ENCODE measurements at regions of chr22 and their contacts with region 1.

Region 1: GRCh38 chr22:38755911-38756532 is at the start of gene SUN2:
- DNase-seq: peak; percentile 92 to 95 (median 92)
- H3K4me3 ChIP-seq: peak within 1 kb of the TSS; percentile 72 to 98
- H3K4me3 Mint-ChIP-seq: peak within 1 kb of the TSS; percentile 97 to 99 (median 99)
- H3K27ac ChIP-seq: peak within 1 kb of the TSS; percentile 74
- H3K27ac Mint-ChIP-seq: peak within 1 kb of the TSS; percentile 90 to 99 (median 98)
- H3K4me1 ChIP-seq: peaks cover 64% of the 10 kb centered on the region
- H3K4me1 Mint-ChIP-seq: peaks cover 35 to 81% (median 53%) of the 10 kb centered on the region in 4 donors
- H3K27me3 ChIP-seq: no peaks in the 10 kb centered on the region
- H3K27me3 Mint-ChIP-seq: no peaks in the 10 kb centered on the region
- total RNA-seq, gene SUN2: 988 to 1,004 TPM

Region 2: DNA sequence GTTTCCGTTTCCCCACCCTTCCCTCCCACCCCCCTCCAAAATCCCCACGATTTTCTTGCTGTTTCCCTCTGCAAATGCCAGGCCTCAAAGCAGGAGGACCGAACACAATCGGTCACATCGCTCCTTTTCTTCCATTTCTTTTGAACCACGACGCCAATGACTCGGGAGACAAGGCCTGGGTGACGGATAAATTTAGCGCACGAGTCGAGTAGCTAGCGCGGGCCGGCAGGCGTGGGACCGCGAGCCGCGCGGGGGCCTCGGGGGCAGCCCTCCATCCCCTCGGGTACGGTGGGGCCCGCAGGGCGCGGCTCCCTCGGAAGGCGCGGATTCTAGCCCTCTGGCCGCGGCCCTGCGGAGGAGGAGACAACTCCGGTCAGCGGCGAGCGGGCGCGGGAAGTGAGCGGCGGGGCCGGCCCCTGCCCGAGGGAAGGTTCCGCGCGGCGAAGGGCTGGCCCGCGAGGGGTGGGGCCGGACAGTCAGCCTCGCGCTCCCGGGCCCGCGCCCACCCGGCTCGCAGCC is 55.7 kb before region 1 on chr22:
- CTCF ChIA-PET with region 1: no interaction called
- POLR2A ChIA-PET with region 1: interaction called, 186 read pairs
- intact Hi-C with region 1: loop called (anchors 1 kb)
- DNase-seq: peak in 2 of 5 donors; percentile 42 to 63
- H3K4me3 ChIP-seq: peak overlapping the region in 1 of 2 donors; percentile 79
- H3K4me3 Mint-ChIP-seq: peak overlapping the region; percentile 90 to 98 (median 92)
- H3K27ac ChIP-seq: peak overlapping the region; percentile 98
- H3K27ac Mint-ChIP-seq: peak overlapping the region; percentile 98 to 100 (median 100)
- H3K4me1 ChIP-seq: peaks cover 61% of the 10 kb centered on the region
- H3K4me1 Mint-ChIP-seq: peaks cover 53 to 69% (median 57%) of the 10 kb centered on the region in 4 donors
- H3K27me3 ChIP-seq: no peaks in the 10 kb centered on the region
- H3K27me3 Mint-ChIP-seq: peaks cover 0 to 4% of the 10 kb centered on the region in 2 donors

Region 3: DNA sequence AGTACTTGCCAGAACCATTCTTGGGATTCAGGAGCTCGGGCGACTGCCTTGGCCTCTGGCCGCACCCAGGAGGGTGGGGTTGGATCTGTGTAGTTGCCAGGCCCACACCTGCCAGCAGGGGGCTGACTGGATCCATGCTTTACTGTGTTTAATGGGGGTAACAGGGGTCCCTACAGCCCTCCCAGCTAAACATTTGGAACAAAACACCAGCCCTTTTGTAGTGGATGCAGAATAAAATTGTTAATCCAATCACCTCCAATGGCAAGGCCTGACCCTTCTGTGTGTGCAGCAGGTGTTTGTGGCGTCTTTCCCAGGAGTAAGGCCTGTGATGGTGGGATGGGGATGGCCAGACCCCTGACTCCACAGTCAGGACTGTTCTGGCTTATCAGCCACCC is 22.7 kb before region 1 on chr22:
- CTCF ChIA-PET with region 1: interaction called, 41 read pairs
- POLR2A ChIA-PET with region 1: interaction called, 1,746 read pairs
- intact Hi-C with region 1: loop called (anchors 1 kb)
- DNase-seq: peak in 3 of 5 donors; percentile 41 to 51 (median 41)
- H3K4me3 ChIP-seq: no peak overlapping the region
- H3K4me3 Mint-ChIP-seq: peak overlapping the region in 2 of 8 donors; percentile 4 to 12
- H3K27ac ChIP-seq: peak overlapping the region; percentile 30
- H3K27ac Mint-ChIP-seq: peak overlapping the region; percentile 49 to 88 (median 84)
- H3K4me1 ChIP-seq: peaks cover 39% of the 10 kb centered on the region
- H3K4me1 Mint-ChIP-seq: peaks cover 18 to 60% (median 33%) of the 10 kb centered on the region in 4 donors
- H3K27me3 ChIP-seq: no peaks in the 10 kb centered on the region
- H3K27me3 Mint-ChIP-seq: no peaks in the 10 kb centered on the region

Region 4: GRCh38 chr22:38766076-38766777 is 10.2 kb after region 1 on chr22:
- CTCF ChIA-PET with region 1: interaction called, 56 read pairs
- POLR2A ChIA-PET with region 1: interaction called, 1,746 read pairs
- intact Hi-C with region 1: loop called (anchors 1 kb)
- DNase-seq: peak in 4 of 5 donors; percentile 32 to 43 (median 38)
- H3K4me3 ChIP-seq: no peak overlapping the region
- H3K4me3 Mint-ChIP-seq: no peak overlapping the region
- H3K27ac ChIP-seq: no peak overlapping the region
- H3K27ac Mint-ChIP-seq: peak overlapping the region in 1 of 7 donors; percentile 68
- H3K4me1 ChIP-seq: peaks cover 13% of the 10 kb centered on the region
- H3K4me1 Mint-ChIP-seq: peaks cover 3 to 18% (median 12%) of the 10 kb centered on the region in 4 donors
- H3K27me3 ChIP-seq: no peaks in the 10 kb centered on the region
- H3K27me3 Mint-ChIP-seq: no peaks in the 10 kb centered on the region

Region 5: DNA sequence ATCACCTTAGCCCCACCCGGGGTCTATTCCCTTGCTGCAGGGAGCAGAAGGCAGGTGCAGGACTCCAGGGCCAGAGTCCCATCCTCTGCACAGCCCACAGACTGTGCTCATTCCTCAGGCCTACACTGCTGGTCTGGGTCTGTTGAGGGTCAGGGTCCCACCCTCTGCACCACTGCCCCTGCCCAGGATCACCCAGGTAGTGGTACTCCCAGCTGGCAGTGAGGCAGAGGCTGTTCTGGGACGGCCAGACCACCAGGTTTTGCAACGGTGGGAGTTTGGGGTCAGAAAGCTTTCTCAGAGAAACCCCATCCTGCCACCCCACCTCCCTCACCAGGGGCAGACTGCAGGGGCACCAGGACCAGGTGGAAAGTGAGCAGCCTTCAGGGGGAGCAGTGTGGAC is 77.0 kb after region 1 on chr22:
- CTCF ChIA-PET with region 1: no interaction called
- POLR2A ChIA-PET with region 1: no interaction called
- intact Hi-C with region 1: no loop called
- DNase-seq: no peak
- H3K4me3 ChIP-seq: no peak overlapping the region
- H3K4me3 Mint-ChIP-seq: no peak overlapping the region
- H3K27ac ChIP-seq: no peak overlapping the region
- H3K27ac Mint-ChIP-seq: no peak overlapping the region
- H3K4me1 ChIP-seq: no peaks in the 10 kb centered on the region
- H3K4me1 Mint-ChIP-seq: peaks cover 0 to 4% (median 1%) of the 10 kb centered on the region in 4 donors
- H3K27me3 ChIP-seq: no peaks in the 10 kb centered on the region
- H3K27me3 Mint-ChIP-seq: no peaks in the 10 kb centered on the region

Region 6: GRCh38 chr22:38843201-38843715 is 87.2 kb after region 1 on chr22:
- CTCF ChIA-PET with region 1: interaction called, 5 read pairs
- POLR2A ChIA-PET with region 1: interaction called, 48 read pairs
- intact Hi-C with region 1: loop called (anchors 5 kb)
- DNase-seq: peak; percentile 56 to 66 (median 61)
- H3K4me3 ChIP-seq: peak overlapping the region in 1 of 2 donors; percentile 50
- H3K4me3 Mint-ChIP-seq: peak overlapping the region in 1 of 8 donors; percentile 32
- H3K27ac ChIP-seq: no peak overlapping the region
- H3K27ac Mint-ChIP-seq: peak overlapping the region in 1 of 7 donors; percentile 69
- H3K4me1 ChIP-seq: peaks cover 20% of the 10 kb centered on the region
- H3K4me1 Mint-ChIP-seq: peaks cover 7 to 31% (median 17%) of the 10 kb centered on the region in 4 donors
- H3K27me3 ChIP-seq: peaks cover 9% of the 10 kb centered on the region
- H3K27me3 Mint-ChIP-seq: peaks cover 0 to 12% of the 10 kb centered on the region in 2 donors

Measured in CD4-positive, alpha-beta memory T cell (primary cell).